SK-N-SH (cell line): ENCODE measurements at regions of chr1 and their contacts with region 1.

Region 1: GRCh38 chr1:9494929-9495758 is 44.1 kb upstream of the SLC25A33 start:
- DNase-seq: peak; percentile 90
- H3K4me3 ChIP-seq: peak overlapping the region; percentile 16 to 39; a peak in 2 of 4 replicates
- H3K27ac ChIP-seq: no peak overlapping the region
- H3K4me1 ChIP-seq: peaks cover 0 to 5% of the 10 kb centered on the region in 2 experiments; a peak in 1 of 4 replicates
- H3K27me3 ChIP-seq: no peaks in the 10 kb centered on the region
- CTCF ChIP-seq: peak; percentile 79
- EP300 ChIP-seq: no peak
- RAD21 ChIP-seq: peak; percentile 69

Region 2: GRCh38 chr1:9110669-9111356 is 384.3 kb before region 1 on chr1:
- CTCF ChIA-PET with region 1: interaction called, 11 read pairs
- POLR2A ChIA-PET with region 1: no interaction called
- DNase-seq: peak; percentile 87
- H3K4me3 ChIP-seq: peak overlapping the region in 1 of 2 experiments; percentile 24; a peak in 1 of 4 replicates
- H3K27ac ChIP-seq: no peak overlapping the region
- H3K4me1 ChIP-seq: peaks cover 0 to 2% of the 10 kb centered on the region in 2 experiments; a peak in 1 of 4 replicates
- H3K27me3 ChIP-seq: no peaks in the 10 kb centered on the region
- CTCF ChIP-seq: peak; percentile 90
- EP300 ChIP-seq: no peak
- RAD21 ChIP-seq: peak; percentile 85

Region 3: DNA sequence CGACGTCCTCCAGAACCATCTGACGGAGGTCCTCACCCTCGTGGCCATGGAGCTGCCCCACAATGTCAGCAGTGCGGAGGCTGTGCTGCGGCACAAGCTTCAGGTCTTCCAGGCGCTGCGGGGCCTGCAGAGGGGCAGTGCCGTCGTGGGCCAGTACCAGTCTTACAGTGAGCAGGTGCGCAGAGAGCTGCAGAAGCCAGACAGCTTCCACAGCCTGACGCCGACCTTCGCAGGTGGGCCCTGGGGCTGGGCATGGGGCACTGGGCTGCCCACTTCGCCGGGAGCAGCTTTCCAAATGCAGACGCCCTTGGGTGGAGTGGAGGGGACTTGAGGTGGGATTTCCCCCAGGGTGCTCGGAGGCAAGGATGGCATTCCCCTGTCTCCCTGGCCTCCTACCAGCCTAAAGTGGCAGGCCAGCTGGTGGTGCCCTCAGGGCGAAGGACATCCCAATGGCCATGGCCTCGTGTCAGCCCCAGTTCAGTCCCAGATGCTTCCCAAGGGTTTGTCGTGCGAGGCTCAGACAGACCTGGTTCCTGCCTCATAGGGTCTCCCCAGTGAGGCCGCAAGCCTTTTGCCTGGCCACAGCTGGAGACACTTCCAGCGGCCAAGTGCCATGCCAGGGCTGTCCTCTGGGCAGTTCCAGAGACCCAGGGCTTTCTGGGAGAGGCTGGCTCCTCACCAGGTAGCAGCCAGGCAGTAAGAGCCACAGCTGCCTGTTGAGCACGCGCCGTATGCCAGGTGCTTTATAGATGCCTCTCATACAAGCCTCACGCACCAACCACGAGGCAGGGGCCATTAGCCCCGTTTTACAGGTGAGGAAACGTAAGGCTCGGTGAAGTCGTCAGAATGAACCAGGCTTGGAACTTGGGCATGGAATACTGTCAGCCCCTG is 232.8 kb before region 1 on chr1:
- CTCF ChIA-PET with region 1: interaction called, 156 read pairs
- POLR2A ChIA-PET with region 1: no interaction called
- DNase-seq: no peak
- H3K4me3 ChIP-seq: no peak overlapping the region
- H3K27ac ChIP-seq: no peak overlapping the region
- H3K4me1 ChIP-seq: no peaks in the 10 kb centered on the region
- H3K27me3 ChIP-seq: no peaks in the 10 kb centered on the region
- CTCF ChIP-seq: no peak
- EP300 ChIP-seq: no peak
- RAD21 ChIP-seq: no peak

Region 4: GRCh38 chr1:9280015-9280860 is 214.9 kb before region 1 on chr1:
- CTCF ChIA-PET with region 1: interaction called, 20 read pairs
- POLR2A ChIA-PET with region 1: no interaction called
- DNase-seq: peak; percentile 82
- H3K4me3 ChIP-seq: no peak overlapping the region
- H3K27ac ChIP-seq: peak overlapping the region in 1 of 2 experiments; percentile 48; a peak in 2 of 4 replicates
- H3K4me1 ChIP-seq: peaks cover 1 to 25% of the 10 kb centered on the region in 2 experiments; a peak in 3 of 4 replicates
- H3K27me3 ChIP-seq: no peaks in the 10 kb centered on the region
- CTCF ChIP-seq: no peak
- EP300 ChIP-seq: no peak
- RAD21 ChIP-seq: no peak

Region 5: GRCh38 chr1:9510130-9510529 is 15.0 kb after region 1 on chr1:
- CTCF ChIA-PET with region 1: interaction called, 27 read pairs
- POLR2A ChIA-PET with region 1: no interaction called
- DNase-seq: no peak
- H3K4me3 ChIP-seq: no peak overlapping the region
- H3K27ac ChIP-seq: no peak overlapping the region
- H3K4me1 ChIP-seq: no peaks in the 10 kb centered on the region
- H3K27me3 ChIP-seq: no peaks in the 10 kb centered on the region
- CTCF ChIP-seq: no peak
- EP300 ChIP-seq: no peak
- RAD21 ChIP-seq: no peak

Region 6: DNA sequence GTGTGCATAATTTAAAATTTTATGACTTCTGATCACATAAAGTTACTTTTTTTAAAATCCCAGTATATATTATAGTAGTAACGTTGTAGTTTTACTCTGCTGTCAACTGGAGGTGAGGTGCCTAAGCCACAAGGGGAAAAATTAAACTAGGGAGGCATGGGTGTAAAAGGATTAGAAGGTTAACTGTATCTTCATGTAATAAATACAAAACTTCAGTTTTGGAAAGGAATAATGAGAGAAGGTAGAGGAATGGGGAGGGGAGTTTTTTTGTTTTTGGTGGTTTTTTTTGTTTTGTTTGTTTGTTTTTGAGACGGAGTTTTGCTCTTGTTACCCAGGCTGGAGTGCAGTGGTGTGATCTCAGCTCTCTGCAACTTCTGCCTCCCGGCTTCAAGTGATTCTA is 49.8 kb after region 1 on chr1:
- CTCF ChIA-PET with region 1: no interaction called
- POLR2A ChIA-PET with region 1: no interaction called
- DNase-seq: no peak
- H3K4me3 ChIP-seq: no peak overlapping the region
- H3K27ac ChIP-seq: no peak overlapping the region
- H3K4me1 ChIP-seq: peaks cover 0 to 3% of the 10 kb centered on the region in 2 experiments; a peak in 2 of 4 replicates
- H3K27me3 ChIP-seq: no peaks in the 10 kb centered on the region
- CTCF ChIP-seq: no peak
- EP300 ChIP-seq: no peak
- RAD21 ChIP-seq: no peak

Region 7: GRCh38 chr1:9580942-9581341 is 85.8 kb after region 1 on chr1:
- CTCF ChIA-PET with region 1: interaction called, 10 read pairs
- POLR2A ChIA-PET with region 1: no interaction called
- DNase-seq: no peak
- H3K4me3 ChIP-seq: no peak overlapping the region
- H3K27ac ChIP-seq: no peak overlapping the region
- H3K4me1 ChIP-seq: no peaks in the 10 kb centered on the region
- H3K27me3 ChIP-seq: no peaks in the 10 kb centered on the region
- CTCF ChIP-seq: no peak
- EP300 ChIP-seq: no peak
- RAD21 ChIP-seq: no peak